Endothelial cell of umbilical vein (primary cell): ENCODE measurements at regions of chr16 and their contacts with region 1.

Region 1: DNA sequence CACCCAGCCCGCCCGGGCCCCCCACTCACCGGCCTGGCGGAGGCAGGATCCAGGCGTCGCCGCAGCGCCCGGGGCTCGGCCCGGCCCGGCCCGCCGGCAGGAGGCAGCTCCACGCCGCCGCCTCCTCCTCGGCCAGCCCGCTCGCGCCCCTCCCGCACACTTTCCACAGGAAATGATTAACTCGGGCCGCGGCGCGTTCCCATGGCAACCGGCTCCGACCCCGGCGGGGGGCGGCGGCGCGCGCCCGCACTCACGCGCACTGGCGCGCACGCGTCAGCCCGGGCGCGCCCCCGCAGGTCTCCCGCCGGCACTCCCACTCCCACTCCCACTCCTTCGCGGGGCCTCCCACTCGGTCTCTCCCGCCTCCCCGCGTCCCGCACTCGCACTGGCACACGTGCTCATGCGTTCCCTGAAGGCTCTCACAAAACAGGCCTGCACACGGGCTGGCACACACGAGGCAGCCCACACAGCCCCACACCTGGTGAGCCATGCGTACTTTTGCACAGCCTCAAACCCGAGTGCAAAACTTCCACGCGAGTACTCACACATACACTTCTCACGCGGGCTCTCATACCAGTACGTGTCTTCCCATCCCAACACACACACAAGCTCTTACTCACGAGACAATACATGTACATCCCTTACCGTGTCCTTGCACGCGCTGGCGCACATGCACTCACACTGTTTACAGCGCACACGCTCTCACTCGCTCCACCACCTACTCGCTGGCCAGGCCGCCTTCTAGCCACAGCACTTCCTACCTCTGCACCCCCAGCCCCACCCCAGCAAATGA is at the start of gene KIFC3:
- DNase-seq: peak; percentile 78
- H3K4me3 ChIP-seq: peak within 1 kb of the TSS; percentile 52 to 70 (median 68)
- H3K27ac ChIP-seq: peak within 1 kb of the TSS; percentile 84
- H3K4me1 ChIP-seq: peaks cover 25% of the 10 kb centered on the region
- H3K27me3 ChIP-seq: no peaks in the 10 kb centered on the region
- CTCF ChIP-seq: no peak
- POLR2A ChIP-seq: peak; percentile 63
- total RNA-seq, gene KIFC3: 56.7 and 62.2 TPM in 2 replicates

Region 2: GRCh38 chr16:57764341-57765159 is 38.0 kb before region 1 on chr16:
- CTCF ChIA-PET with region 1: interaction called, 5 read pairs
- POLR2A ChIA-PET with region 1: no interaction called
- dilution Hi-C with region 1: no loop called
- intact Hi-C with region 1: loop called (anchors 1 kb)
- DNase-seq: peak; percentile 71
- H3K4me3 ChIP-seq: no peak overlapping the region
- H3K27ac ChIP-seq: peak overlapping the region; percentile 56
- H3K4me1 ChIP-seq: peaks cover 4% of the 10 kb centered on the region
- H3K27me3 ChIP-seq: no peaks in the 10 kb centered on the region
- CTCF ChIP-seq: no peak
- POLR2A ChIP-seq: no peak

Region 3: DNA sequence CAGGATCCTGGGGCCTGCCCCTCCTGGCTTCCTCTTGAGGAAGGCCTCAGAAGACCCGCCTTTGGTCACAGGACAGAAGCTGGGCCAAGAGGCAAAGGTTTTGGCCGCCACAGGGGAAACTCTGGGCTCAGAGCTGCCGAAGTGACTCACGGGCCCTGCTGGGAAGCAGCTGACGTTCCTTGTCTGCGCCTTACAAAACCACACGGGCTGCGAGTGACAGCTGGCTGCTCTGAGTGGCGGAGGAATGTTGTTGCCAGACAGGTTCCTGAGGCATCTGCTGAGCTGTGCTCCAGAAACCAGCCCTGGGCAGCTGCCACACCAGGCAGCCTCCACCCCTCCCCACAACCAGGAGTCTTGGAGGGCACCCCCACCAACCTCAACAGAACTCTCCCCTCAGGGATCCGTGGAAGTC is 13.8 kb after region 1 on chr16:
- CTCF ChIA-PET with region 1: interaction called, 15 read pairs
- POLR2A ChIA-PET with region 1: no interaction called
- dilution Hi-C with region 1: no loop called
- intact Hi-C with region 1: no loop called
- DNase-seq: peak; percentile 48
- H3K4me3 ChIP-seq: no peak overlapping the region
- H3K27ac ChIP-seq: no peak overlapping the region
- H3K4me1 ChIP-seq: peaks cover 5% of the 10 kb centered on the region
- H3K27me3 ChIP-seq: no peaks in the 10 kb centered on the region
- CTCF ChIP-seq: no peak
- POLR2A ChIP-seq: no peak

Region 4: GRCh38 chr16:57893559-57894389 is 91.2 kb after region 1 on chr16:
- CTCF ChIA-PET with region 1: no interaction called
- POLR2A ChIA-PET with region 1: no interaction called
- dilution Hi-C with region 1: no loop called
- intact Hi-C with region 1: loop called (anchors 5 kb)
- DNase-seq: peak; percentile 92
- H3K4me3 ChIP-seq: peak overlapping the region in 1 of 3 experiments; percentile 33
- H3K27ac ChIP-seq: peak overlapping the region; percentile 90
- H3K4me1 ChIP-seq: peaks cover 20% of the 10 kb centered on the region
- H3K27me3 ChIP-seq: no peaks in the 10 kb centered on the region
- CTCF ChIP-seq: no peak
- POLR2A ChIP-seq: no peak